Activated T-helper 1 cell treated with anti-CD3 and anti-CD28 coated beads, Interleukin-12 subunit alpha, Interleukin-12 subunit beta, Interleukin-2, Interleukin-4 antibody, amounts not matched to agents 30 ng/mL and 10 ng/mL and 1 ng/mL, durations not matched to agents 14 hours and 24 hours and 36 hours (primary cell): ENCODE measurements at regions of chr4 and their contacts with region 1.

Region 1: GRCh38 chr4:83012687-83013419 is 2.2 kb upstream of the LIN54 start:
- DNase-seq: peak; percentile 97
- H3K4me3 Mint-ChIP-seq: peak overlapping the region; percentile 91
- H3K27ac Mint-ChIP-seq: peak overlapping the region; percentile 92
- H3K4me1 Mint-ChIP-seq: peaks cover 45% of the 10 kb centered on the region
- H3K27me3 Mint-ChIP-seq: no peaks in the 10 kb centered on the region

Region 2: DNA sequence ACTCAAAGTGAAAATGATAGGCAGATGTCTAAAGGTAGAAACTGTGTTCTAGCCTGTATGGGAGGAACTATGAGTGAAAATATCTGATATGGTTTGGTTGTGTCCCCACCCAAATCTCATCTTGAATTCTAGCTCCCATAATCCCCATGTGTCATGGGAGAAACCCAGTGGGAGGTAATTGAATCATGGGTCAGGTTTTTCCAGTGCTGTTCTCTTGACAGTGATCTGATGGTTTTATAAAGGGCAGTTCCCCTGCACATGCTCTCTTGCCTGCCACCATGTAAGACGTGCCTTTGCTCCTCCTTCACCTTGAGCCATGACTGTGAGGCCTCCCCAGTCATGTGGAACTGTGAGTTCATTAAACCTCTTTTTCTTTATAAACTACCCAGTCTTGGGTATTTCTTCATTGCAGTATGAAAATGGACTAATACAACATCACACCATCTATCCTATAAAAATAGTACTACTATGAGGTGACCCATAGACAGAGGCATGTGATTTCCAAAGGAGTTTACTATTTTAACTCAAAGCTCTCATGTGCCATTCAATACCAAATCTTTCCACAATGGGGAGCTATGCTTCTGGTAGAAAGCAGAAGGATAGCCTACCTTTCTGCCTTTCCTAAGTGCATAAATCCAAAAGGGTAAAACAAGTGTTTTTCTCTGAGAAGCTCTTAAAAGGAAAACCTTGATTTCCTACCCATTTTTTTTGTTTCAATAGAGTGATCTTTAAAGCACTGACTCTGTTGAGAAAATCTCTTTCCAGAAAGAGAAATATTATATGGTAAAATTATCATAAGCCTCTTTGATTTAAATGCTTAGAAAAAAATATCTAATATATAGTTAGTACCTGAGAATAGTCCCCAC is 160.7 kb before region 1 on chr4:
- intact Hi-C with region 1: loop called (anchors 1 kb)
- DNase-seq: no peak
- H3K4me3 Mint-ChIP-seq: no peak overlapping the region
- H3K27ac Mint-ChIP-seq: peak overlapping the region; percentile 73
- H3K4me1 Mint-ChIP-seq: peaks cover 14% of the 10 kb centered on the region
- H3K27me3 Mint-ChIP-seq: no peaks in the 10 kb centered on the region

Region 3: DNA sequence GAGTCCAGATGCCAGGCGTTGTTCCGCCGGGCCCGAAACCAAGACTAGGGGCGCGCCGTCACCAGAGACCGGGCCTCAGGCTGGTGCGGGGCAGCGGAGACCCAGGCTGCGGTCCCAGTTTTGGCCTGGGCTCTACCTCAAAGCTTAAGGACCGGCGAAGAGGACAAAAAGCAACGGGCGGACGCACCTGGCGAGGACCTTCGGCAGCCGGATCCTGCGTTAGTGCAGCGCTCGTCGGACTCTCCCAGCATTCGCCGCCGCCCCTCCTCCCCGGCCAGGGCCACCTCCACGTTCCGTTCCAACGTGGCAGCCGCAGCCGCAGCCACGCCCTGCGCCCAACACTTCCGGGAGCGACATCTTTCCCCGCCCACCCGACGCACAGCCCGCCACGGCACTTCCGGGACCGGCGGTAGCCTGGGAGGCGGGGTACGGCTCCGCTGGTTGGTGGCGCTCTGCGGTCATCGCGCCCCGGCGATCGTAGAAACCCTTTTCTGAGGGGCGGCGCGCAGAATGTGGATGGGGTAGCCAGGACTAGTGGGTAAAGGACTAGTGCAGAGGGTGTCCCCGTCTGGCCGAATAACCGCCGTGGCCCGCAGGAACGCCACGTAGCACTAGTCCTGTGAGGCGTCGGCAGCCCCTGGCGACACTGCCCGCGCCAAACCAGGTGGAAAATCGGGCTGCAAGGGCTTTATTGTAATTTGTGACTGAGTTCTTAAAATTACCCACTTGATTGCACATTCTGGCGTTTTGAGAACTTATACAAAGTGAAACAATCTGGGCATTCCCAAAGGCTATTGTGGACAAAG is 121.7 kb before region 1 on chr4 and contains the start of gene SEC31A:
- intact Hi-C with region 1: loop called (anchors 1 kb)
- DNase-seq: peak; percentile 96
- H3K4me3 Mint-ChIP-seq: peak within 1 kb of the TSS; percentile 88
- H3K27ac Mint-ChIP-seq: peak within 1 kb of the TSS; percentile 86
- H3K4me1 Mint-ChIP-seq: peaks cover 51% of the 10 kb centered on the region
- H3K27me3 Mint-ChIP-seq: no peaks in the 10 kb centered on the region
- total RNA-seq, gene SEC31A: 118 and 123 TPM in 2 replicates

Region 4: DNA sequence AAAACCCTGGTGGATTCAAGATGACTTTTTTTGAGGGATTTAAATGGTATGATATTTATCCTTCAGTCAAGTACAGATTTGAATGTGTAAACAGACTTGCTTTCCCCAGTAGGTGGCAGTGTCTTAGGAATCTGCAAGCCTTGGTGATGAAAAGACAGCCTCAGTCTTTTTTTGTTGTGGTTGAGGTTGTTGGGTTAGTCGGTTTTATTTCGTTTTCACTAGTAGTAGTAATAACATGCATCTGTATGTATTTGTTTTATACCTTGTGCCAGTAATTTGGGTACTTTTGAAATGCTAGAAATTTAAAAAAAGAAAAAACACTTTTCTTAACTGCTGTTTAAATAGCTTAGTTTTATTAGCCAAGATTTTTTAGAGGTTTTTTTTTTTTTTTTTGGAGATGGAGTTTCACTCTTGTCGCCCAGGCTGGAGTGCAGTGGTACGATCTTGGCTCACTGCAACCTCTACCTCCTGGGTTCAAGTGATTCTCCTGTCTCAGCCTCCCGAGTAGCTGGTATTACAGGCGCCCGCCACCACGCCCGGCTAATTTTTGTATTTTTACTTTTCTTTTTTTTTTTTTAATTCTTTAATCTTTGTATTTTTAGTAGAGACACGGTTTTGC is 61.3 kb after region 1 on chr4:
- intact Hi-C with region 1: loop called (anchors 1 kb)
- DNase-seq: peak; percentile 66
- H3K4me3 Mint-ChIP-seq: no peak overlapping the region
- H3K27ac Mint-ChIP-seq: peak overlapping the region; percentile 19
- H3K4me1 Mint-ChIP-seq: peaks cover 29% of the 10 kb centered on the region
- H3K27me3 Mint-ChIP-seq: no peaks in the 10 kb centered on the region